Posterior vena cava (tissue), 2 donors: ENCODE measurements at regions of chr4 and their contacts with region 1.

Region 1: DNA sequence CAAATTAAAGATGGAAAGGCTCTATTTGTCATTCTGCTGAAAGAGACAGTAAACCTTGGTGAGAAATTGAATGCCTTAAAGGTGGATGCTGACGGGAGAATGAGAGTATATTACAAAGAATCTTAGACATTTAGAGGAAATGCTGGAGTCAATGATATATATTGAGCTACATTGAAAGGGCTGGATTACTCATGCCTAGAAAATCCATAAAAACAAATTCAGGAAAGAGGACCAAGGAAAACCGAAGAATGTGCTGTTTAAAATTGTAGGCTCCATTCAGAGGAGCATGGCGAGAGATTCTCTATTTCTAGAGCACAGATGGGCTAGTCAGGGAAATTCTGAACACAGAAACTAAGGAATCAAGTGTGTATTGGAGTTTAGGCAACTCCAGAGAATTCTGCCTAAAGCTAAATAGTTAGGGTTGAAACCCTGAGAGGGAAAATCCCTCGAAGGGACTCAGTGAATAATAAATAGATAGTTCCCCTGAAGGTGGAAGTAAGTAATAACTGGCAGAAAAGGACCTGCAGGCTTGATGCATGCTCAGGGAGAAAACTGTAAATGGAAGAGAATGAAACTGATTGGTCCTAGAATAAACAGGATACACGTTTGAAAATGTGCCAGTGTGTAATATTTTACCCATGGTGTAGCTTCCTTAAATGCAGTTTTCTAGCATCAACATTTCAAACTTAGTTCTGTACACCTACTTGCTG is 1532.4 kb upstream of the TENM3 start:
- DNase-seq: no peak

Region 2: DNA sequence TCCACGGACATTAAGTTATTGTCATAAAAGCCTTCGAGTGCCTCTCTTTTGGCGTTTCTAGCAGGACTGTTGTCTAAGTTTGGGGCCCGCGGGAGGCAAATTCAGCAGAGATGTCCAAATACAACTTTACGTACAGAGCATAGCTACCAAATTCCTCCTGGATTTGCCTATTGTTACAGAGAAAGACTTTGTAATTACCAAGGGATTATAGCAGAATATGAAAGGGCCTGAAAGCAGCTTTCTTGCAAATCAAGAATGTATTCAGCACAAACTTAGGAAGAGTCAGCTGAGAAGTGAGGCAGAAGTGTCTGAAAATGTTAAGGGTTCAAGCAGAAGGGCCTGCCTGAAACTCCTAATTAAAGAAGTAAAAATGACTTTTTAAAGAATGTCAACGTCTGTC is 479.0 kb after region 1 on chr4:
- intact Hi-C with region 1: loop called in 1 of 2 experiments (anchors 5 kb)
- DNase-seq: no peak

Region 3: GRCh38 chr4:181503687-181504390 is 793.1 kb after region 1 on chr4:
- intact Hi-C with region 1: loop called in 1 of 2 experiments (anchors 5 kb)
- DNase-seq: no peak